Spleen (tissue), 13 donors: ENCODE measurements at regions of chr13 and their contacts with region 1.

Region 1: DNA sequence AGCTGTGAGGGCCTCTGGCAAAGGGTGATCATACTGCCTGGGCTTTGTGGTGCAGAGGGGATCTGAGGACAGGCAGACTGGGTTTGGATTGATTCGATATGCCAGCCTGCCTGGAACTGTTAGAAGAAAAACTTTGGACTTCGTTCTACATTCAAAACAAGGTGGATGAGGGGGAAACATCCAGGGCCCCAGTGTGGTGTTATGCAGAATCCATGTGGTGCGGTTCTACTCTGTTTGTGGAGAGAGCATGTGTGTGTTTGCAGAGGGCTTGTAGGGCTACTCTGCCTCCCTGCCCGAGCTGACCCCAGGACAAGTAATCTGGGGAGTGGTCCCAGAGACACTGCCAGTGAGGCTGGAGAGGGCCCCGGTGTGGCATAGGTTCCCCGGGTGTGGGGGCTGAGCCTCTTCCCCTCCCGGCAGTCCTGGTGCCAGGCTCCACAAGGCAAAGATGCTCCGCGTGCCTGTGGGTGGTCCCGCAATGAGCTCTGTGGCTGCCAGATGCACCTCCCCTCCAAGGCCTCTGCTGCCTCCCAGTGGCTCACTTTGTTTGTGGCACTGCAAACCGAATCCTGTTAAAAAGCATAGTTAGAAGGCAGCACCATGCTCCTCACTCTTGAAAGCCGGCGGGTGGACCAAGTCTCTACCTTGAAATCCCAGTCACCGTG is 22.3 kb upstream of the TFDP1 start:
- DNase-seq: peak; percentile 82
- H3K4me3 ChIP-seq: no peak overlapping the region
- H3K27ac ChIP-seq: no peak overlapping the region
- H3K4me1 ChIP-seq: peaks cover 0 to 13% (median 4%) of the 10 kb centered on the region in 6 donors
- H3K27me3 ChIP-seq: peaks cover 0 to 13% (median 0%) of the 10 kb centered on the region in 7 donors
- CTCF ChIP-seq: peak in 10 of 11 experiments; percentile 31 to 77 (median 64)
- POLR2A ChIP-seq: no peak

Region 2: DNA sequence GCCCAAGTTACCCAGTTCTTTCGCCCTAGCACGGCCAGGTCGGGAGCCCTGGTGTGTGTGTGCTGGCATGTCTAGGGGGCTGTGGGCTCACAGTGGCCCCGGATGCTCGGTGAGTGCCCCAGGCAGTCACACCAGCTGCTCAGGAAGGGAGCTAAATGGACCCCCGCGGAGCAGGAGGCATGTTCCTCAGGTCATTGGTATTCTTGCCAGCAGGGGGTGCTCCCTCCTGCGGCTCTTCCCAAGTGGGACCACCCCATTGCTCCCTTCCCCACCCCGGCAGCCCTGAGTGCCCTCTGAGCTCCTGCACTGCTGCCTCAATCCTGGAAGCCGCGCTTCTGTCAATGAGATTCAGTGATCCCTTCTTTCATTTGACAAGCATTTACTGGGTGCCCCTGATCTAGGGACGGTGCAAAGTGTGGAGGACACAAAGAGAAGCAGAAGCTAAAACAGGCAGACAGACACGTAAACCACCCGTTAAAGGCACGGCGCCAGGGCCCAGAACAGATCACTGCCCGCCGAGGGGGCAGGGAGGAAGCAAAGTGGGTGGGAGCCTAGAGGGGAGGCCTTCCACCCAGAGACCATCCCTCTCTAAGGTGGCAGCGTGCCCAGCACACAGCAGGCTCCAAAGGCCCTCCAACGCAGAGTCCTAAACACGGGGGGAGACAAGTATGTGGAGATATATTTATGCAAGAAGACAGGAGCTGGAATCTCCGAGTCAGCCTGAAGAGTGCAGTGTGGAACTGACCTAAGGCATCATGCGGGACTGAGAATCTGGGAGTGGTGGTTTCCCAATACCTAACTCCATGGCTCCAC is 103.8 kb before region 1 on chr13:
- intact Hi-C with region 1: loop called (anchors 10 kb)
- DNase-seq: no peak
- H3K4me3 ChIP-seq: no peak overlapping the region
- H3K27ac ChIP-seq: no peak overlapping the region
- H3K4me1 ChIP-seq: no peaks in the 10 kb centered on the region
- H3K27me3 ChIP-seq: no peaks in the 10 kb centered on the region
- CTCF ChIP-seq: peak in 6 of 11 experiments; percentile 24 to 49 (median 39)
- POLR2A ChIP-seq: no peak